HEK293T (cell line): ENCODE measurements at regions of chr4 and their contacts with region 1.

Region 1: GRCh38 chr4:57200928-57201327 is 90.7 kb upstream of the IGFBP7 start:
- DNase-seq: no peak

Region 2: GRCh38 chr4:57168982-57169381 is 31.9 kb before region 1 on chr4:
- CTCF ChIA-PET with region 1: interaction called, 11 read pairs
- POLR2A ChIA-PET with region 1: no interaction called
- DNase-seq: no peak

Region 3: GRCh38 chr4:57190601-57191481 is 10.1 kb before region 1 on chr4:
- CTCF ChIA-PET with region 1: interaction called, 16 read pairs
- POLR2A ChIA-PET with region 1: no interaction called
- DNase-seq: peak; percentile 70

Region 4: DNA sequence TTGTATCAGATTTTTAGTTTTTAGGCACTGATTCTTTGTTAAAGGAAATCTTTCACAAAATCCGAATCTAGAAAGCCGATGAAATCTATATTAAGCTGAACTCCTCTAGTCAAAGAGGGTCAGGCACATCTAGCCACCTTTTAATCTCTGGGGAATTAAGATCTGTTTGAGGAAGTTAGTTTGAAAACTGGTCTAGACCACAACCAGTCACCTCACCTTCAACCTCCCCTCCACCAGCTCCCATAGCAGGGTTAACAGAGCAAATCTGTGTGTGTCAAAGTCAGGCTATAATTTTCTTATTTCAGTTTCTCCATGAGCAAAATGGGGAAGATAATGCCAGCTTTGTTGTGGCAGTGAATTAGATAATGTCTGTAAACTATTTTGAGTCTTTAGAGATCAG is 19.2 kb after region 1 on chr4:
- CTCF ChIA-PET with region 1: no interaction called
- POLR2A ChIA-PET with region 1: no interaction called
- DNase-seq: no peak

Region 5: DNA sequence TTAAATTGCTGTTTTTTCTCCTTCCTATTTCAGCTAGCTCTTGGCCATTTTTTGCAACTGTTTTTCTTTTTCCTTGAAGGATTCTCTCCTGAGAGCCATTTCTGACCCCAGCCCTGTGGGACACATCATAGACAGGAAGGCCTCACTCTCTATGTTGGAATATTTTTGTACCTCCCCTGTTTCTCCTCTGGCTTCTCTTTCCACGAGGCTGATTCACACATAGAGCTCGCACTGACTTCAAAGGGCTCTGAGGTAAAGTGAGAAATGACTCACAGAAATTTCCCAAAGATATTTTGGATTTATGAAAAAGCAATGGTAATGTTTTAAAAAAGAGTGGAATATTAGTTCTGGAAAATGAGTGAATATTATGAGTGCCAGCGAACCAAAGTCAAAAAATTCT is 91.0 kb after region 1 on chr4:
- CTCF ChIA-PET with region 1: no interaction called
- POLR2A ChIA-PET with region 1: no interaction called
- DNase-seq: no peak